OCI-LY7 (cell line): ENCODE measurements at regions of chr21 and their contacts with region 1.

Region 1: DNA sequence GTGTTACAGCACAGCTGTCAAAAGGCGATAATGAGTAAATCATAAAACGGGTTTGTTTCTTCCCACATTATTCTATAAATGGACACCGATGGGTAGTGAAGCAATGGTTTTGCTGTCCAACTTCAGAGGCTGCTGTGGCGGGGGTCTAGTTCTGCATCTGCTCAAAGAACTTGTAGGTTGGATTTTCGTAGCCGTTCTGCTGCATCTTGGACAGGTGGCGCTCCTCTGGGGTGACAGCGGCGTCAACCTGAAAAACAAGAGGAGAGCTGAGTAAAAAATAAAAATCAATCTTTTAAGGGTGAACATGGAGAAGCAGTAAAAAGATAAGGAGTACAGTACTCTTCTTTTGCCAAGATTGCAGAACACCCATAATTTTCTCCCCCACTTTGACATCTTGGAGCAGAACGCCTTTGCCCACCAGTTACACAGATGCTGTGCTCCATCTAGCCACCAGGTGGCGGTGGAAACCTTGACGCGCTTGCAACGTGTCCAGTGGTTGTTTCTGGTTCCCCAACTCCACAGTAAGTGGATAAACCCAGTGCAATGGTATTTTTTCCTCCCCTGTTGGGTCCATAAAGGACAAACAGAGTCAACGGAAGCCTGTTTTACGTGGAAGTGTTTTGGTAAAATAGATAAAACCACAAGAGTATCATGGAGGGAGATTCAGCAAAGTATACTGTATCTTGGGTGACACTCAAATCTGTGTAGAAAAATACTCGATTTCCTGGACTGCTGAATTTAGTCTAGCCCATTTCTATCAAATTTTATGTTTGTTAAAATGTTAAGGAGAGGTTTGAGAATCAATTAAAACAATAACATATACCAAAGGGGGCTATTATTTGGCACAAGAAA is 147.0 kb downstream of the GABPA start:
- DNase-seq: peak; percentile 62
- H3K4me3 ChIP-seq: no peak overlapping the region
- H3K27ac ChIP-seq: no peak overlapping the region
- H3K4me1 ChIP-seq: no peaks in the 10 kb centered on the region
- CTCF ChIP-seq: peak; percentile 99

Region 2: DNA sequence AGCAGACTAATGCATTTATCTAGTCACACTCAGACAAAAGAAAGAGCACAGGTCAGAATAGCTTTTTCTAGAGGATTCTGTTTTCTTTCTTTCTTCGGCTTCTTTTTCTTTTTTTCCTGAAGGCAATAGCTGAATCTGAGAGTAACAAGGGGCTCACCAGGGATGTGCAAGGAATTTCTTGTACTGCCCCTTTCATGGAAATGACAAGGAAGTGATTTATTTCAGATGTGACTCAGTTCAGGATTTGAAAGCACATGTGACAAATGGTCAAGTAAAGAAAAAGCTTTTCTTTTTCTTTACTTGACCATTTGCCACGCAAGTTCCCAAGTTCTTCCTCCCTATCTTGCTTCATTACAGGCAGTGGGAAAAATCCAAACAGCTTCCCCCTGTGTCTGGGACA is 55.0 kb after region 1 on chr21:
- CTCF ChIA-PET with region 1: no interaction called
- POLR2A ChIA-PET with region 1: no interaction called
- intact Hi-C with region 1: no loop called
- DNase-seq: no peak
- H3K4me3 ChIP-seq: no peak overlapping the region
- H3K27ac ChIP-seq: no peak overlapping the region
- H3K4me1 ChIP-seq: no peaks in the 10 kb centered on the region
- CTCF ChIP-seq: no peak

Region 3: GRCh38 chr21:26001356-26001755 is 119.6 kb after region 1 on chr21:
- CTCF ChIA-PET with region 1: no interaction called
- POLR2A ChIA-PET with region 1: no interaction called
- intact Hi-C with region 1: loop called (anchors 1 kb)
- DNase-seq: peak; percentile 21
- H3K4me3 ChIP-seq: no peak overlapping the region
- H3K27ac ChIP-seq: no peak overlapping the region
- H3K4me1 ChIP-seq: no peaks in the 10 kb centered on the region
- CTCF ChIP-seq: peak; percentile 67

Region 4: DNA sequence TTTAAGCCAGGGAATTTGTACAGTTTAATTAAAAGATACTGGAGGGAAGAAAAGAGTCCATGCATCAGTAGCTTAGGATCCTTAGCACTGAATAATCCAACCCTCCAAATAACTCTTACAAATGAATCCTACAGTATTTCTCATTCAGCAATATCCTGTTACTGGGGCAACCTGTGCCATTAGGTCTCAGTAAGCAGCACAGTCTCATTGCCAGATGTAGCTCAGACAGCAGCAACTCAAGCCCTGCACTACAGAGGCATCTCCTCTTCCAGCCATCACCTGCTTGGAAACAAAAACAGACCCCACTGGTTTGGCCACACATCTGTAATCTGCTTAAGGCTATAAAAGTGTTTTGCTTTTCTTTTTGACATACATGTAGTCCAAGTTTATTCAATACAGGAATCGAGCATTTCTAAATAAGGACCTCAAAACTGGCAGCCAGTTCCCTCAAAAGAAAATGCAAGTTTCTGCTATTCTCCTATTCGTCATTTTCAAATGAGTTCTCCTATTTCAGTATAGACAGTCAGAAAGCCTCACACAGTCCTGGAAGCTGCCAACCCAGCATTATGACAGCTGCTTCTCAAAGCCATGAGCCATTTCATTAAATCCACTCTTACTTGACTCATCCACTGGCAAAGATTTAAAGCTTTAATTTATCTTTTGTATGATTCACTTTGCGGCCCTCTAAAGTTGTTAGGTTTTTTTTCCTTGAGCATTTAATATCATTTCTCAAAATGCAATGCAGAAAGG is 159.9 kb after region 1 on chr21:
- CTCF ChIA-PET with region 1: no interaction called
- POLR2A ChIA-PET with region 1: no interaction called
- intact Hi-C with region 1: no loop called
- DNase-seq: no peak
- H3K4me3 ChIP-seq: no peak overlapping the region
- H3K27ac ChIP-seq: no peak overlapping the region
- H3K4me1 ChIP-seq: no peaks in the 10 kb centered on the region
- CTCF ChIP-seq: no peak

Region 5: GRCh38 chr21:26437326-26438009 is 555.7 kb after region 1 on chr21:
- CTCF ChIA-PET with region 1: no interaction called
- POLR2A ChIA-PET with region 1: no interaction called
- intact Hi-C with region 1: loop called (anchors 10 kb)
- DNase-seq: no peak
- H3K4me3 ChIP-seq: no peak overlapping the region
- H3K27ac ChIP-seq: no peak overlapping the region
- H3K4me1 ChIP-seq: no peaks in the 10 kb centered on the region
- CTCF ChIP-seq: no peak